ENCODE measurements at regions of chr11 and their contacts with region 1.

Region 1: DNA sequence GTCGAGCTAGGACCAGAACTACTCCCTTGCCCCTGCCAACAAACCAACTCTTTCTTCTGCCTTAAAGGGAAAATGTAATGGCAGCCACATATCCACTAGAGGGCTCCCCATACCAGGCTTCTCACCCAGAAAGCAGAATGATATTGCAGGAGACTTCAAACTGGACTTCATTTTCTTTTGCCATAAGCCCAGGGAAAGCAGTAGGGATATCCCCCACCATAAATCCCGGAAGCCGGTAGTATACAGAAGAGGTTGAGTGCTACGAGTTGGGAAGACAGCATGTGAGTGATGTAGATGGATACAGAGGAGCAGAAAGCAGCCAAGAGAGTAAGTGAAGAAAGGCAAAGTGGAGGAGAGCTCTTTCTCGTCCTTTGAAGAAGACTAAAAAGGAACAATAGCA is 12.1 kb downstream of the PLAAT5 start:
- DNase-seq: peak; percentile 72
- H3K4me3 Mint-ChIP-seq: no peak overlapping the region
- H3K27ac Mint-ChIP-seq: no peak overlapping the region
- H3K4me1 Mint-ChIP-seq: no peaks in the 10 kb centered on the region
- H3K27me3 Mint-ChIP-seq: no peaks in the 10 kb centered on the region
- CTCF ChIP-seq: peak; percentile 92

Region 2: GRCh38 chr11:63445720-63446119 is 33.2 kb before region 1 on chr11:
- CTCF ChIA-PET with region 1: no interaction called
- POLR2A ChIA-PET with region 1: no interaction called
- intact Hi-C with region 1: no loop called
- DNase-seq: peak; percentile 9
- H3K4me3 Mint-ChIP-seq: no peak overlapping the region
- H3K27ac Mint-ChIP-seq: no peak overlapping the region
- H3K4me1 Mint-ChIP-seq: peaks cover 6% of the 10 kb centered on the region
- H3K27me3 Mint-ChIP-seq: peaks cover 49% of the 10 kb centered on the region
- CTCF ChIP-seq: no peak

Region 3: DNA sequence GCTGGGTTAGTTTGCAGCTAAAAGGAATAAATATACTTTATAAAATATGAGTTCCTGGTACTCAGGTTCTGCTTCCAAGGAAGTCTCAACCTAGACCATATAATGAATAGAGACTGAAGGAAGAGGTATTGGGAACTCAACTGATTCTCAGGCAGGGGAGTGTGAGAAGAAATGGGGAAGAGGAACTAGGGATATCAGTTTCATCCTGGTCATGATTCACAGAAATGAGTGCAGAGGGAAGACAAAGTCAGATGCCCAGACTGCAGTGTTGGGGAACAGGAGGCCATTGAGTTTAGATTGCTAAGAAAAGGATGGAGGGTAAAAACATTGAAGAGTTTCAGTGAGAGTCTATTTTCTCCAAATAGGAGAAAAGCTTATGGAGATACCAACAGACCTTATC is 16.8 kb before region 1 on chr11:
- CTCF ChIA-PET with region 1: interaction called, 11 read pairs
- POLR2A ChIA-PET with region 1: no interaction called
- intact Hi-C with region 1: no loop called
- DNase-seq: no peak
- H3K4me3 Mint-ChIP-seq: no peak overlapping the region
- H3K27ac Mint-ChIP-seq: no peak overlapping the region
- H3K4me1 Mint-ChIP-seq: no peaks in the 10 kb centered on the region
- H3K27me3 Mint-ChIP-seq: peaks cover 33% of the 10 kb centered on the region
- CTCF ChIP-seq: no peak

Region 4: GRCh38 chr11:63536669-63537292 is 57.9 kb after region 1 on chr11 and contains the start of gene PLAAT4:
- CTCF ChIA-PET with region 1: interaction called, 11 read pairs
- POLR2A ChIA-PET with region 1: no interaction called
- intact Hi-C with region 1: no loop called
- DNase-seq: peak; percentile 11
- H3K4me3 Mint-ChIP-seq: peak within 1 kb of the TSS; percentile 39
- H3K27ac Mint-ChIP-seq: peak within 1 kb of the TSS; percentile 84
- H3K4me1 Mint-ChIP-seq: peaks cover 7% of the 10 kb centered on the region
- H3K27me3 Mint-ChIP-seq: no peaks in the 10 kb centered on the region
- CTCF ChIP-seq: no peak
- total RNA-seq, gene PLAAT4: 0.69 and 0.96 TPM in 2 replicates

Region 5: DNA sequence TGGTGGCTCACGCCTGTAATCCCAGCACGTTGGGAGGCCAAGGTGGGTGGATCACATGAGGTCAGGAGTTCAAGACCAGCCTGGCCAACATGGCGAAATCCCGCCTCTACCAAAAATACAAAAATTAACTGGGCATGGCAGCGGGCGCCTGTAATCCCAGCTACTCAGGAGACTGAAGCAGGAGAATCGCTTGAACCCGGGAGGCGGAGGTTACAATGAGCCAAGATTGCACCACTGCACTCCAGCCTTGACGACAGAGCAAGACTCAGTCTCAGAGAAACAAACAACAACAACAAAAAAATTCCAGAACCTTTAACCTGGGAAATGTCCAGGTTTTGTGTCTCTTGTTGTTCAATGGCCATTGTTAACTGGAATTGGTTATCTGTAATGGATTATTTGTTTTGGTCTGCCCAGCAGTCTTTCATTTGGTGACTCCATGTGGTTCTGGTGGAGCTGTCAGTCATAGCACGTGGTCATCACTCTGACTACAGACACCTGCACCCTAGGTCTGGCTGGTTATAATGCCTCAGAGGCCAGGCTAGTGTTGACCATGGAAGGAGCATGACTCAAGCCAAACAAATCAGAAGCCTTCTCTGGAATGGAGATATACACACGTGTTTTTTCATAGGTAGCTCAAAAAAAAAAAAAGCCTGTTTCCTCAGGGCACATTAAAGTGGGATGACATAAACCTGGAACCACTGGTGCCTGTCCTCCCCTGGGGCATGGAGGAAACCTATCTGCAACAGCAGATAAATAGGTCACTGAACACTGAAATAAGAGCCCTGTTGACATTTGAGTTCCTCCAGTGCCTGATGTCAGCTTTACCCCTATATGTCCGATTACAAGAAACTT is 143.3 kb after region 1 on chr11:
- CTCF ChIA-PET with region 1: interaction called, 93 read pairs
- POLR2A ChIA-PET with region 1: interaction called, 7 read pairs
- intact Hi-C with region 1: no loop called
- DNase-seq: peak; percentile 26
- H3K4me3 Mint-ChIP-seq: no peak overlapping the region
- H3K27ac Mint-ChIP-seq: no peak overlapping the region
- H3K4me1 Mint-ChIP-seq: peaks cover 16% of the 10 kb centered on the region
- H3K27me3 Mint-ChIP-seq: no peaks in the 10 kb centered on the region
- CTCF ChIP-seq: no peak

Region 6: DNA sequence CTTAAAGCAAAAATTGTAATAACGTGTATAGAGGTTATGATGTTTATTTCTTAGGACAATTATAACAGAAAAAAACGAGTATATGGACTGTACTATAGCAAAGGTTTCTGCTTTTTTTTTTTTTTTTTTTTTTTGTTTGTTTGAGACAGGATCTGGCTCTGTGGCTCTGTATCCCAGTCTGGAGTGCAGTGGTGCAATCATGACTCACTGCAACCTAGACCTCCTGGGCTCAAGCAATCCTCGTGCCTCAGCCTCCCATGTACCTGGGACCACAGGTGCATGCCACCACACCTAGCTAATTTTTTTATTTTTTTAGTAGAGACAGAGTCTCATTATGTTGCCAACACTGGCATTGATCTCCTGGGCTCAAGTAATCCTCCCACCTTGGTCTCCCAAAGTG is 250.4 kb after region 1 on chr11:
- CTCF ChIA-PET with region 1: interaction called, 12 read pairs
- POLR2A ChIA-PET with region 1: no interaction called
- intact Hi-C with region 1: no loop called
- DNase-seq: peak; percentile 17
- H3K4me3 Mint-ChIP-seq: no peak overlapping the region
- H3K27ac Mint-ChIP-seq: no peak overlapping the region
- H3K4me1 Mint-ChIP-seq: no peaks in the 10 kb centered on the region
- H3K27me3 Mint-ChIP-seq: no peaks in the 10 kb centered on the region
- CTCF ChIP-seq: no peak

Region 7: GRCh38 chr11:64040684-64041322 is 561.9 kb after region 1 on chr11:
- CTCF ChIA-PET with region 1: no interaction called
- POLR2A ChIA-PET with region 1: no interaction called
- intact Hi-C with region 1: no loop called
- DNase-seq: peak; percentile 16
- H3K4me3 Mint-ChIP-seq: no peak overlapping the region
- H3K27ac Mint-ChIP-seq: no peak overlapping the region
- H3K4me1 Mint-ChIP-seq: no peaks in the 10 kb centered on the region
- H3K27me3 Mint-ChIP-seq: no peaks in the 10 kb centered on the region
- CTCF ChIP-seq: peak; percentile 36